ENCODE measurements at regions of chr7 and their contacts with region 1.

Region 1: GRCh38 chr7:24819916-24820689 is 62.8 kb upstream of the GSDME start:
- DNase-seq: peak; percentile 87
- ATAC-seq: peak; percentile 40
- H3K4me3 Mint-ChIP-seq: peak overlapping the region; percentile 64
- H3K27ac Mint-ChIP-seq: peak overlapping the region; percentile 100
- H3K4me1 Mint-ChIP-seq: peaks cover 43% of the 10 kb centered on the region
- H3K27me3 Mint-ChIP-seq: no peaks in the 10 kb centered on the region

Region 2: GRCh38 chr7:24075426-24075810 is 744.7 kb before region 1 on chr7:
- CTCF ChIA-PET with region 1: no interaction called
- POLR2A ChIA-PET with region 1: no interaction called
- intact Hi-C with region 1: no loop called
- DNase-seq: no peak
- ATAC-seq: no peak
- H3K4me3 Mint-ChIP-seq: no peak overlapping the region
- H3K27ac Mint-ChIP-seq: no peak overlapping the region
- H3K4me1 Mint-ChIP-seq: peaks cover 6% of the 10 kb centered on the region
- H3K27me3 Mint-ChIP-seq: peaks cover 12% of the 10 kb centered on the region

Region 3: GRCh38 chr7:24572997-24573625 is 247.0 kb before region 1 on chr7 and contains the start of gene PALS2:
- CTCF ChIA-PET with region 1: no interaction called
- POLR2A ChIA-PET with region 1: interaction called, 3 read pairs
- intact Hi-C with region 1: loop called in 1 of 2 experiments (anchors 2 kb)
- DNase-seq: peak; percentile 86
- ATAC-seq: peak; percentile 68
- H3K4me3 Mint-ChIP-seq: peak within 1 kb of the TSS; percentile 88
- H3K27ac Mint-ChIP-seq: peak within 1 kb of the TSS; percentile 86
- H3K4me1 Mint-ChIP-seq: peaks cover 34% of the 10 kb centered on the region
- H3K27me3 Mint-ChIP-seq: peaks cover 12% of the 10 kb centered on the region
- total RNA-seq, gene PALS2: 20.8 to 41.7 TPM

Region 4: DNA sequence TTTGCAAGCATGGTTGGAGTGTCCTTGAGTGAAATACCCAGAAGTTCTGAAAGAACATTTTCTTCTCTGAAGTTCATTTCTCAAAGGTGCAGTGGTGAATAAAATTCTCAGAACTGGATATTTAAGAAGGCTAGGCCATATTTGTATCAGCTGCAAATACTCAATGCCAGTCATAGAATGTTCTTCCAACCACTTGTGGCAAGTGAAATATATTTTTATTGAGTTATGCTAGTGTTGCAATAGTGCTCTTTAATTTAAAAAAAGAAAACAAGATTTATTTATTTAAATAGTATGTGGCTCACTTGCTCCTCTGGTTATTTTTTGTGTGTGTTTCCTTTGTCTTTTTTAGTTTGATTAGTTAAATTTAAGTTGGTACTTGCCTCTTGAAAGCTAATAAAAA is 182.4 kb before region 1 on chr7:
- CTCF ChIA-PET with region 1: no interaction called
- POLR2A ChIA-PET with region 1: no interaction called
- intact Hi-C with region 1: no loop called
- DNase-seq: no peak
- ATAC-seq: no peak
- H3K4me3 Mint-ChIP-seq: no peak overlapping the region
- H3K27ac Mint-ChIP-seq: no peak overlapping the region
- H3K4me1 Mint-ChIP-seq: no peaks in the 10 kb centered on the region
- H3K27me3 Mint-ChIP-seq: no peaks in the 10 kb centered on the region

Region 5: GRCh38 chr7:24869572-24869971 is 49.5 kb after region 1 on chr7:
- CTCF ChIA-PET with region 1: interaction called, 4 read pairs
- POLR2A ChIA-PET with region 1: no interaction called
- intact Hi-C with region 1: loop called (anchors 1 kb)
- DNase-seq: no peak
- ATAC-seq: no peak
- H3K4me3 Mint-ChIP-seq: no peak overlapping the region
- H3K27ac Mint-ChIP-seq: no peak overlapping the region
- H3K4me1 Mint-ChIP-seq: peaks cover 41% of the 10 kb centered on the region
- H3K27me3 Mint-ChIP-seq: no peaks in the 10 kb centered on the region

Region 6: DNA sequence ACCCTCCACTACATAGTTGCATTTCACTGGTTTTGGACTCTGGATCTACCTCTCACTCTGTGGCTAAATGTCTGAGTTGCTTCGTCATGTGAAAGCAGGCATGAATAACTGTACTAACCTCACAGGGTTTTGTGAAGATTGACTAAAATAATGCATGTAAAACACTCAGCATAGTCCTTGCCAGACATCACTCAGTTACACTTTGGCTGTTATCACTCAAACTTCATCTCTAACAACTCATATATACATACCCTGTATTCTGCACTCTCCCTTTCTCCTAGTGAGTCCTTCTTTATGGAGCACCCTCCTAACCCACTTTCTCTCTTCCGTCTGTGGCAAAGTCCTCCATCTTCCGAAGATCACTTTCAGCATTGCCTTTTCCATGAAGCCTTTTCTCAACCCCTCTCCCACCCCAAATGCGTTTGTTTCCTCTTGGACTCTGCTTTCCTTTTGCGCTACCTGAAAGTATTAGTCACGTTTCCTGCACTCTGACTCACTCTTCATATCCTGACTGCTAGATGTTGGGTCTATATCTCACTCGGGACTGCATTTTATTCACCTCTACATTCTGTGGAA is 87.3 kb after region 1 on chr7:
- CTCF ChIA-PET with region 1: interaction called, 5 read pairs
- POLR2A ChIA-PET with region 1: interaction called, 4 read pairs
- intact Hi-C with region 1: loop called (anchors 1 to 2 kb)
- DNase-seq: peak; percentile 47
- ATAC-seq: peak; percentile 85
- H3K4me3 Mint-ChIP-seq: no peak overlapping the region
- H3K27ac Mint-ChIP-seq: no peak overlapping the region
- H3K4me1 Mint-ChIP-seq: peaks cover 43% of the 10 kb centered on the region
- H3K27me3 Mint-ChIP-seq: no peaks in the 10 kb centered on the region

Region 7: GRCh38 chr7:25028370-25029021 is 208.4 kb after region 1 on chr7:
- CTCF ChIA-PET with region 1: interaction called, 15 read pairs
- POLR2A ChIA-PET with region 1: interaction called, 4 read pairs
- intact Hi-C with region 1: loop called (anchors 1 to 2 kb)
- DNase-seq: peak; percentile 50
- ATAC-seq: peak; percentile 89
- H3K4me3 Mint-ChIP-seq: peak overlapping the region; percentile 41
- H3K27ac Mint-ChIP-seq: peak overlapping the region; percentile 87
- H3K4me1 Mint-ChIP-seq: peaks cover 46% of the 10 kb centered on the region
- H3K27me3 Mint-ChIP-seq: no peaks in the 10 kb centered on the region

Region 8: GRCh38 chr7:25098096-25099046 is 278.3 kb after region 1 on chr7:
- CTCF ChIA-PET with region 1: interaction called, 152 read pairs
- POLR2A ChIA-PET with region 1: no interaction called
- intact Hi-C with region 1: loop called (anchors 1 to 2 kb)
- DNase-seq: peak; percentile 76
- ATAC-seq: peak; percentile 81
- H3K4me3 Mint-ChIP-seq: no peak overlapping the region
- H3K27ac Mint-ChIP-seq: no peak overlapping the region
- H3K4me1 Mint-ChIP-seq: peaks cover 8% of the 10 kb centered on the region
- H3K27me3 Mint-ChIP-seq: peaks cover 2% of the 10 kb centered on the region

Measured in activated CD4-positive, alpha-beta T cell treated with anti-CD3 and anti-CD28 coated beads for 36 hours (primary cell).